ENCODE measurements at regions of chr3 and their contacts with region 1.

Region 1: GRCh38 chr3:24237971-24238767 is 256.5 kb downstream of the THRB start:
- DNase-seq: peak; percentile 8
- ATAC-seq: peak; percentile 93
- H3K4me3 ChIP-seq: no peak overlapping the region
- H3K27ac ChIP-seq: no peak overlapping the region
- H3K4me1 ChIP-seq: no peaks in the 10 kb centered on the region
- H3K27me3 ChIP-seq: no peaks in the 10 kb centered on the region; a peak in 1 of 4 replicates
- CTCF ChIP-seq: peak; percentile 73 to 79 (median 78)
- EP300 ChIP-seq: no peak
- POLR2A ChIP-seq: no peak
- RAD21 ChIP-seq: peak; percentile 87

Region 2: GRCh38 chr3:23894254-23895061 is 343.7 kb before region 1 on chr3:
- CTCF ChIA-PET with region 1: no interaction called
- POLR2A ChIA-PET with region 1: no interaction called
- RAD21 ChIA-PET with region 1: no interaction called
- SMC1A ChIA-PET with region 1: interaction called, 3 read pairs
- in situ Hi-C with region 1: loop called (anchors 10 kb)
- intact Hi-C with region 1: loop called (anchors 2 kb)
- DNase-seq: no peak
- ATAC-seq: peak; percentile 25
- H3K4me3 ChIP-seq: no peak overlapping the region
- H3K27ac ChIP-seq: no peak overlapping the region
- H3K4me1 ChIP-seq: no peaks in the 10 kb centered on the region
- H3K27me3 ChIP-seq: no peaks in the 10 kb centered on the region
- CTCF ChIP-seq: no peak
- EP300 ChIP-seq: no peak
- POLR2A ChIP-seq: peak; percentile 14
- RAD21 ChIP-seq: no peak

Region 3: GRCh38 chr3:23991683-23992628 is 246.2 kb before region 1 on chr3:
- CTCF ChIA-PET with region 1: interaction called, 12 read pairs
- POLR2A ChIA-PET with region 1: no interaction called
- RAD21 ChIA-PET with region 1: interaction called, 3 read pairs
- SMC1A ChIA-PET with region 1: no interaction called
- in situ Hi-C with region 1: loop called (anchors 5 kb)
- intact Hi-C with region 1: no loop called
- DNase-seq: no peak
- ATAC-seq: no peak
- H3K4me3 ChIP-seq: no peak overlapping the region
- H3K27ac ChIP-seq: no peak overlapping the region
- H3K4me1 ChIP-seq: no peaks in the 10 kb centered on the region
- H3K27me3 ChIP-seq: no peaks in the 10 kb centered on the region
- CTCF ChIP-seq: no peak
- EP300 ChIP-seq: no peak
- POLR2A ChIP-seq: no peak
- RAD21 ChIP-seq: no peak

Region 4: DNA sequence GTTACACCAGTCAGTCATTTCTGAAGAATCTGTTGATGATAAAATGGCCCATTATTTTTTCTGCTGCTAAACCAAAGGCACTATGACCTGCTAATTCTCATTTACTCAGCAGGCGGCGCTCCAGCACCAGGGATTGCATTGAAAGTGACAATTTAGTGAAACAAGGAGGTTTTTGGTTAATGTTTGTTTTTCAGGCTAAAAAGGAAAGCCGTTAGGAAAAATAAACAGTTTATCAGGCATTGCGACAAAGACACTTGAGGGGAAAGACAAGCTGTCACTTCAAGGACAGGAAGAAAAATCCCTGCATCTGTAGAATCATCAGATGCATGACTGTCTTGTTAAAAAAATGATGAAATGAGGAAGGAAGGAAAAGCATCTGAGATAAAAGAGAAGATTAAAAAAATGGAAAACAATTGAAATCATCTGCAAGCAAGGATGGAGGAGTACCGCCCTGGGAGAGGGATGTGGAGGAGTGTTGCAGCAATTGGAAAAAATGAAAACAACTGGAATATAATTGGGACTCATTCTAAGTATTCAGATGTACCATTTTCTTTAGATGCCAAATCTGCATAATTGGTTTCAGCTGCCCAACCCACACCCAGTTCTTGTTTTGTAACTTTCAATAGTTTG is 239.0 kb before region 1 on chr3:
- CTCF ChIA-PET with region 1: interaction called, 15 read pairs
- POLR2A ChIA-PET with region 1: no interaction called
- RAD21 ChIA-PET with region 1: interaction called, 4 read pairs
- SMC1A ChIA-PET with region 1: interaction called, 7 read pairs
- in situ Hi-C with region 1: loop called (anchors 5 kb)
- intact Hi-C with region 1: loop called (anchors 1 kb)
- DNase-seq: no peak
- ATAC-seq: peak; percentile 72
- H3K4me3 ChIP-seq: no peak overlapping the region
- H3K27ac ChIP-seq: no peak overlapping the region
- H3K4me1 ChIP-seq: no peaks in the 10 kb centered on the region
- H3K27me3 ChIP-seq: no peaks in the 10 kb centered on the region; a peak in 1 of 4 replicates
- CTCF ChIP-seq: peak; percentile 88 to 97 (median 96)
- EP300 ChIP-seq: no peak
- POLR2A ChIP-seq: no peak
- RAD21 ChIP-seq: peak; percentile 100

Region 5: DNA sequence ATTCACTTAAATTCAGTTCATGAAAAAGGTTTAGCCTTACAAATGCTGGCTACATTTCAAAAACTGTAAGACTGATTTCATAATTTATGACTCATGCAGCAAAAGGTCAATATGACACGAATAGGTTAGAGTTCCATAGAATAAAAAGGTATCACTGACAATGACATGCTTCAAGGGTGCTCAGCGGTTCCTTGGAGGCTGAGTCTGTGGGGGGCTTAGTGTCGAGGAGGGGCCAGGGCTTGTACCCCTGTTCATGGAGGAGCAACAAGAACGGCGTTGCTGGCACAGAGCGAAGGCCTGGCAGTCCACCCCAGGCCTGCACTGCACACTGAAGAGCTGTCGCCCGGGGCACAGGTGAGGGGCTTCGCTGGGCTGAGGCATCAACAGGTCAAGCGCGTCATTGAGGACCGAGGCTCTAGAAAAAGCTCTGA is 118.8 kb before region 1 on chr3:
- CTCF ChIA-PET with region 1: no interaction called
- POLR2A ChIA-PET with region 1: no interaction called
- RAD21 ChIA-PET with region 1: no interaction called
- SMC1A ChIA-PET with region 1: no interaction called
- in situ Hi-C with region 1: no loop called
- intact Hi-C with region 1: no loop called
- DNase-seq: no peak
- ATAC-seq: no peak
- H3K4me3 ChIP-seq: no peak overlapping the region
- H3K27ac ChIP-seq: no peak overlapping the region
- H3K4me1 ChIP-seq: no peaks in the 10 kb centered on the region
- H3K27me3 ChIP-seq: no peaks in the 10 kb centered on the region
- CTCF ChIP-seq: no peak
- EP300 ChIP-seq: no peak
- POLR2A ChIP-seq: no peak
- RAD21 ChIP-seq: no peak

Region 6: GRCh38 chr3:24185738-24186384 is 52.3 kb before region 1 on chr3:
- CTCF ChIA-PET with region 1: interaction called, 16 read pairs
- POLR2A ChIA-PET with region 1: no interaction called
- RAD21 ChIA-PET with region 1: interaction called, 8 read pairs
- SMC1A ChIA-PET with region 1: interaction called, 4 read pairs
- in situ Hi-C with region 1: no loop called
- intact Hi-C with region 1: loop called (anchors 1 kb)
- DNase-seq: no peak
- ATAC-seq: peak; percentile 94
- H3K4me3 ChIP-seq: no peak overlapping the region
- H3K27ac ChIP-seq: no peak overlapping the region
- H3K4me1 ChIP-seq: no peaks in the 10 kb centered on the region
- H3K27me3 ChIP-seq: no peaks in the 10 kb centered on the region
- CTCF ChIP-seq: peak; percentile 60 to 68 (median 68)
- EP300 ChIP-seq: no peak
- POLR2A ChIP-seq: no peak
- RAD21 ChIP-seq: peak; percentile 59